CD8-positive, alpha-beta T cell (primary cell): ENCODE measurements at regions of chr17 and their contacts with region 1.

Region 1: GRCh38 chr17:40909351-40909750 is 24.3 kb upstream of the KRT20 start:
- DNase-seq: peak; percentile 33 to 81 (median 66)
- ATAC-seq: peak; percentile 88
- H3K4me3 ChIP-seq: no peak overlapping the region
- H3K4me3 Mint-ChIP-seq: no peak overlapping the region
- H3K27ac ChIP-seq: no peak overlapping the region
- H3K27ac Mint-ChIP-seq: no peak overlapping the region
- H3K4me1 ChIP-seq: no peaks in the 10 kb centered on the region
- H3K4me1 Mint-ChIP-seq: no peaks in the 10 kb centered on the region
- H3K27me3 ChIP-seq: peaks cover 0 to 5% of the 10 kb centered on the region in 2 experiments
- H3K27me3 Mint-ChIP-seq: peaks cover 35% of the 10 kb centered on the region
- CTCF ChIP-seq: peak; percentile 82

Region 2: GRCh38 chr17:40803617-40804082 is 105.7 kb before region 1 on chr17:
- CTCF ChIA-PET with region 1: interaction called, 4 read pairs
- POLR2A ChIA-PET with region 1: no interaction called
- intact Hi-C with region 1: loop called (anchors 2 to 5 kb)
- DNase-seq: peak; percentile 50 to 82 (median 75)
- ATAC-seq: peak; percentile 92
- H3K4me3 ChIP-seq: no peak overlapping the region
- H3K4me3 Mint-ChIP-seq: no peak overlapping the region
- H3K27ac ChIP-seq: no peak overlapping the region
- H3K27ac Mint-ChIP-seq: no peak overlapping the region
- H3K4me1 ChIP-seq: no peaks in the 10 kb centered on the region
- H3K4me1 Mint-ChIP-seq: peaks cover 4% of the 10 kb centered on the region
- H3K27me3 ChIP-seq: peaks cover 0 to 4% of the 10 kb centered on the region in 2 experiments
- H3K27me3 Mint-ChIP-seq: peaks cover 44% of the 10 kb centered on the region
- CTCF ChIP-seq: peak; percentile 94

Region 3: DNA sequence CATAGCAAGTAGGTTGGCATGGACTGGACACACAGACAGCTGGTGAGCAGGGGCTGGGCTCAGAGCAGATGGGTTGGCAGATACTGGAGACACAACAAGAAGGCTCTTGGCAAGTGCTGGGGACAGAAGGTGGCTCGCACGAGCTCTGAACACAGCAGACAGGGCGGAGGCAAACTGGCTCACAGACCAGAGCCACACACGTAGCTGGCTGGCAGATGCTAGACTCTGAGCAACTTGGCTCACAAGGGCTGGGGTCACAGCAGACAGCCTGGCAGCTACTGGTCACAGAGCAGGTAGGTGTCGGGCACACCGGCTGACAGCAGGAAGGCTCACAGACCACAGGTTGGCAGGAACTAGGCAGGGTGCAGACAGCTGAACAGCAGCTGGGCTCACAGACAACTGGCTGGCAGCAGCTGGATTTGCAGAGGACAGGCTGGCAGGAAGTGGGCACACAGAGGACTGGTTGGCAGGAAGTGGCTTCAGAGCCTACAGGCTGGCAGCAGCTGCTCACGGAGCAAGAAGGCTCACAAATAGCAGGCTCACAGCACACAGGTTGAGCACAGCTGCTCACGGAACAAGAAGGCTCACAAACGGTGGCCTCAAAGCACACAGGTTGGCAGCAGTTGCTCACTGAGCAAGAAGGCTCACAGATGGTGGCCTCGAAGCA is 399.0 kb after region 1 on chr17:
- CTCF ChIA-PET with region 1: no interaction called
- POLR2A ChIA-PET with region 1: no interaction called
- intact Hi-C with region 1: loop called in 1 of 2 experiments (anchors 5 kb)
- DNase-seq: peak; percentile 75 to 95 (median 84)
- ATAC-seq: peak; percentile 82
- H3K4me3 ChIP-seq: peak overlapping the region; percentile 4 to 25
- H3K4me3 Mint-ChIP-seq: peak overlapping the region; percentile 56
- H3K27ac ChIP-seq: peak overlapping the region; percentile 79 to 80
- H3K27ac Mint-ChIP-seq: peak overlapping the region; percentile 98
- H3K4me1 ChIP-seq: peaks cover 48% of the 10 kb centered on the region
- H3K4me1 Mint-ChIP-seq: peaks cover 62% of the 10 kb centered on the region
- H3K27me3 ChIP-seq: no peaks in the 10 kb centered on the region
- H3K27me3 Mint-ChIP-seq: no peaks in the 10 kb centered on the region
- CTCF ChIP-seq: no peak

Region 4: GRCh38 chr17:41496820-41497408 is 587.6 kb after region 1 on chr17:
- CTCF ChIA-PET with region 1: interaction called, 6 read pairs
- POLR2A ChIA-PET with region 1: no interaction called
- intact Hi-C with region 1: loop called in 1 of 2 experiments (anchors 1 kb)
- DNase-seq: peak; percentile 14 to 70 (median 46)
- ATAC-seq: peak; percentile 79
- H3K4me3 ChIP-seq: no peak overlapping the region
- H3K4me3 Mint-ChIP-seq: no peak overlapping the region
- H3K27ac ChIP-seq: no peak overlapping the region
- H3K27ac Mint-ChIP-seq: no peak overlapping the region
- H3K4me1 ChIP-seq: peaks cover 8% of the 10 kb centered on the region
- H3K4me1 Mint-ChIP-seq: peaks cover 7% of the 10 kb centered on the region
- H3K27me3 ChIP-seq: no peaks in the 10 kb centered on the region
- H3K27me3 Mint-ChIP-seq: peaks cover 6% of the 10 kb centered on the region
- CTCF ChIP-seq: peak; percentile 49